Common myeloid progenitor, CD34-positive (primary cell): ENCODE measurements at regions of chr10 and their contacts with region 1.

Region 1: GRCh38 chr10:6088721-6089390 is at the start of gene RBM17:
- DNase-seq: peak; percentile 95 to 99 (median 98)
- H3K4me3 ChIP-seq: peak within 1 kb of the TSS; percentile 79 to 94 (median 87)
- H3K27ac ChIP-seq: peak within 1 kb of the TSS; percentile 74 to 87
- H3K4me1 ChIP-seq: peaks cover 23 to 57% (median 49%) of the 10 kb centered on the region in 4 experiments
- H3K27me3 ChIP-seq: no peaks in the 10 kb centered on the region

Region 2: GRCh38 chr10:6014241-6014761 is 74.6 kb before region 1 on chr10:
- CTCF ChIA-PET with region 1: interaction called, 40 read pairs
- POLR2A ChIA-PET with region 1: no interaction called
- DNase-seq: peak; percentile 61 to 74 (median 66)
- H3K4me3 ChIP-seq: peak overlapping the region in 1 of 7 experiments; percentile 10
- H3K27ac ChIP-seq: no peak overlapping the region
- H3K4me1 ChIP-seq: peaks cover 0 to 10% (median 6%) of the 10 kb centered on the region in 4 experiments
- H3K27me3 ChIP-seq: no peaks in the 10 kb centered on the region

Region 3: GRCh38 chr10:6050801-6051445 is 37.9 kb before region 1 on chr10:
- CTCF ChIA-PET with region 1: interaction called, 47 read pairs
- POLR2A ChIA-PET with region 1: interaction called, 3 read pairs
- DNase-seq: peak; percentile 84 to 97 (median 97)
- H3K4me3 ChIP-seq: peak overlapping the region; percentile 27 to 81 (median 55)
- H3K27ac ChIP-seq: peak overlapping the region; percentile 42 to 71
- H3K4me1 ChIP-seq: peaks cover 24 to 61% (median 55%) of the 10 kb centered on the region in 4 experiments
- H3K27me3 ChIP-seq: no peaks in the 10 kb centered on the region

Region 4: DNA sequence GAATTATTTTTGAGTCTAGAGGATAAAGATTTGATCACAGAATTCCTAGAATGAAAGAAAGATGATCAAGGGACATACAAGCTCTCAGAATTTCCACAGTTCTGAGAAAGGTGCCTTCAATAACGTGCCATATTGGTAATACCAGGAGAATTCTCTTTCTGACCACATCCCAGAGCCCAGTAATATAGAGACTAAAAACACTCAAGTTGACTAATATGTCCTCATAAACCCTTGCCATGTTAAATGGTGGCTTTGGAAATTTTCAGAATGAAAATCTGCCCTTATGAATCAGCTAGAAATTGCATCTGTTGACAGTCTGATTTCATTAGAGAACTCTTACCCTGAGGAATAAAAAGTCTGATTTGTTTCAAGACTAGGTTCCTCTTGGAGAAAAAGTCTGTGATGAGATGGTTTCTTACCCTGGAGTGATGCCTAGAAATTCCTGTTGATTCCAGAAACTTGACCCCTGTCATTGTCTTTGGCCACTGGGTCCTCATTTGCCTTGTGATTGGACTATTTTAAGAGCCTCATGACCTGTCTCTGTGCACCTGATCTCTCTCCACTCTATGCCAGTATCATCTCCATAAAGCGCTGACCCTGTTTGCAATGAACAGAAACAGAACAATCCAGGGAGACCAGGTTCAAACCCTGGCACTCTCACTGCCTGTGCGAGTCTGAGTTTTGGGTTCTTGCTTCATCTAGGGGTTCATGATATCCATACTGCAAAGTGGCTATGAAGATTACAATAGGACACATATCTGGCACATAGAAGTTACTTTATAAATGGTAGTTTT is 30.0 kb before region 1 on chr10:
- CTCF ChIA-PET with region 1: interaction called, 47 read pairs
- POLR2A ChIA-PET with region 1: no interaction called
- DNase-seq: no peak
- H3K4me3 ChIP-seq: no peak overlapping the region
- H3K27ac ChIP-seq: no peak overlapping the region
- H3K4me1 ChIP-seq: peaks cover 4 to 46% (median 34%) of the 10 kb centered on the region in 4 experiments
- H3K27me3 ChIP-seq: peaks cover 0 to 5% (median 0%) of the 10 kb centered on the region in 5 experiments

Region 5: GRCh38 chr10:6068422-6068821 is 20.4 kb before region 1 on chr10:
- CTCF ChIA-PET with region 1: interaction called, 23 read pairs
- POLR2A ChIA-PET with region 1: no interaction called
- DNase-seq: peak; percentile 74 to 97 (median 96)
- H3K4me3 ChIP-seq: peak overlapping the region in 1 of 7 experiments; percentile 31
- H3K27ac ChIP-seq: peak overlapping the region; percentile 31 to 67
- H3K4me1 ChIP-seq: peaks cover 32 to 78% (median 73%) of the 10 kb centered on the region in 4 experiments
- H3K27me3 ChIP-seq: no peaks in the 10 kb centered on the region

Region 6: GRCh38 chr10:6218692-6219493 is 130.0 kb after region 1 on chr10:
- CTCF ChIA-PET with region 1: no interaction called
- POLR2A ChIA-PET with region 1: no interaction called
- DNase-seq: no peak
- H3K4me3 ChIP-seq: no peak overlapping the region
- H3K27ac ChIP-seq: no peak overlapping the region
- H3K4me1 ChIP-seq: peaks cover 0 to 13% (median 4%) of the 10 kb centered on the region in 4 experiments
- H3K27me3 ChIP-seq: no peaks in the 10 kb centered on the region